Psoas muscle (tissue), 8 donors: ENCODE measurements at regions of chr7 and their contacts with region 1.

Region 1: GRCh38 chr7:74306730-74307469 is 17.7 kb downstream of the CLIP2 start:
- DNase-seq: peak; percentile 63 to 69
- ATAC-seq: peak in 3 of 4 donors; percentile 51 to 71 (median 60)
- H3K4me3 ChIP-seq: peak overlapping the region; percentile 39
- H3K27ac ChIP-seq: no peak overlapping the region
- H3K4me1 ChIP-seq: peaks cover 13% of the 10 kb centered on the region
- H3K27me3 ChIP-seq: peaks cover 0 to 11% (median 9%) of the 10 kb centered on the region in 3 donors
- CTCF ChIP-seq: no peak

Region 2: GRCh38 chr7:74061840-74062539 is 244.9 kb before region 1 on chr7:
- intact Hi-C with region 1: no loop called
- DNase-seq: peak; percentile 84 to 87
- ATAC-seq: peak; percentile 84 to 92 (median 89)
- H3K4me3 ChIP-seq: peak overlapping the region; percentile 43
- H3K27ac ChIP-seq: peak overlapping the region; percentile 69
- H3K4me1 ChIP-seq: peaks cover 19% of the 10 kb centered on the region
- H3K27me3 ChIP-seq: no peaks in the 10 kb centered on the region
- CTCF ChIP-seq: no peak

Region 3: GRCh38 chr7:74371381-74372341 is 64.8 kb after region 1 on chr7:
- intact Hi-C with region 1: loop called in 1 of 2 experiments (anchors 10 kb)
- DNase-seq: no peak
- ATAC-seq: no peak
- H3K4me3 ChIP-seq: no peak overlapping the region
- H3K27ac ChIP-seq: no peak overlapping the region
- H3K4me1 ChIP-seq: no peaks in the 10 kb centered on the region
- H3K27me3 ChIP-seq: peaks cover 0 to 5% (median 1%) of the 10 kb centered on the region in 3 donors
- CTCF ChIP-seq: no peak